GM13977 (cell line): ENCODE measurements at regions of chrX and their contacts with region 1.

Region 1: DNA sequence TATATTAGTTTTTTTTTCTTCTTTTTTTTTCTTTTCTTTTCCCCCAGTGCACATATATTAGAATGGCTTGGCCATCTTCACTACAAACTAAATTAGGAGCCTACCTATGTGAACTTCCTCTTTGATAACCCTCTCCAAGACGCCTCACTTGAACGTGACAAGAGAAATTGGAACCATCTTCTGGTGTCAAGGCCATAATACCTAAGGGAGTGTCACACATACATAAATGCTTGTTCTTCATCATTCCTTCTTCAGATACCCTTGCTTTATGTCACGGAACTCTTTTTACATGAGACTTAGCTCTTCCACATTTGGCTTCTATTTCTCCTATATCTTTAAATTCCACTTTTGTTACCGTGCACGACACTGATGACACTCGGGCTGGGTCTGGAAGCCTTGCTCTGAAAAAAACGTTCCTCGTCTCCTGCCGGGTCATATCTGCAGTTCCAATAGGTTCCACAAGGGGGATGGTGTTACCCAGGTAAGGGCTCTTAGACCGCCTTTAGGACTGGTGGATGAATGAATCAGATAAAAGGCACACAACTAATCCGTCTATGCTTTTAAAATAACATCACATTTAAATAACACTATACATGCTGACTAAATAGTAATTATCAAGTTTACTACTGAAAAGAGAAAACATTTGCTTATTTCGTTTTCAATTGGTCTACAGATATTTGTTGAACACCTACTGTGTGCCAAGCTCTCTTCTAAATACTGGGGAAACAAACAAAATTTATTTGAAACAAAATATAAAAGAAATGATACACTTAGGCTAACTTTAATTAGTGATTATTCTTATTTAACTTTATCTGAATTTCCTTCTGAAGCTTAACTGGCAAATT is 19.9 kb downstream of the DGAT2L6 start:
- DNase-seq: peak; percentile 33
- CTCF ChIP-seq: peak; percentile 61

Region 2: GRCh38 chrX:70422851-70423341 is 225.7 kb after region 1 on chrX and contains the start of gene GDPD2:
- in situ Hi-C with region 1: loop called (anchors 25 kb)
- DNase-seq: no peak
- CTCF ChIP-seq: no peak